ENCODE measurements at regions of chr6 and their contacts with region 1.

Region 1: DNA sequence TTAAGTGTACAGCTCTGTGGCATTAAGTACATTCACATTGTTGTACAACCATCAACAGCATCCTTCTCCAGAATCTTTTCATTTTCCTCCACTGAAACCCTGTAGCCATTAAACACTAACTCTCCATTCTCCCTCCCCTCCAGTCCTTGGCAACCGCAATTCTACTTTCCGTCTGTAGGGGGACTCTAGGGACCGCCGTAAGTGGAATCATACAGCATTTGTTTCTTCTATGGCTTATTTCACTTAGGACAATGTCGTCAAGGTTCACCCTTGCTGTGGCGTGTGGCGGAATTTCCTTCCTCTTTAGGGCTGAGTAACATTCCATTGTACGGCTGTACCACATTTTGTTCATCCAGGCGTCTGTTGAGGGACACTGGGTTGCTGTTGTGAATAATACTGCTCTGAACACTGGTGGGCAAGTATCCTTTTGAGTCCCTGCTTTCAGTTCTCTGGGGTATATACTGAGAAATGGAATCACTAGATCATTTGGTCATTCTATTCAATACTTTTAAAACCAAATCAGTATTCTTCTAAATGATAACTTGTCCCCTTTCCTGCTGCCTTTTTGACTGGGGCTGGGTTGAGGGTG is 50.7 kb downstream of the PPP1R3G start:
- DNase-seq: no peak
- H3K4me3 ChIP-seq: no peak overlapping the region
- H3K27ac ChIP-seq: no peak overlapping the region
- H3K4me1 ChIP-seq: no peaks in the 10 kb centered on the region
- H3K27me3 ChIP-seq: no peaks in the 10 kb centered on the region
- CTCF ChIP-seq: peak; percentile 67

Region 2: GRCh38 chr6:4008324-4009047 is 1127.4 kb before region 1 on chr6:
- CTCF ChIA-PET with region 1: interaction called, 18 read pairs
- POLR2A ChIA-PET with region 1: no interaction called
- intact Hi-C with region 1: no loop called
- DNase-seq: peak in 1 of 2 experiments; percentile 75
- H3K4me3 ChIP-seq: no peak overlapping the region
- H3K27ac ChIP-seq: peak overlapping the region; percentile 54
- H3K4me1 ChIP-seq: peaks cover 5% of the 10 kb centered on the region
- H3K27me3 ChIP-seq: no peaks in the 10 kb centered on the region
- CTCF ChIP-seq: peak; percentile 70

Region 3: GRCh38 chr6:5190507-5190906 is 54.6 kb after region 1 on chr6:
- CTCF ChIA-PET with region 1: no interaction called
- POLR2A ChIA-PET with region 1: no interaction called
- intact Hi-C with region 1: no loop called
- DNase-seq: peak; percentile 10 to 87
- H3K4me3 ChIP-seq: no peak overlapping the region
- H3K27ac ChIP-seq: peak overlapping the region; percentile 55
- H3K4me1 ChIP-seq: peaks cover 14% of the 10 kb centered on the region
- H3K27me3 ChIP-seq: no peaks in the 10 kb centered on the region
- CTCF ChIP-seq: no peak

Region 4: DNA sequence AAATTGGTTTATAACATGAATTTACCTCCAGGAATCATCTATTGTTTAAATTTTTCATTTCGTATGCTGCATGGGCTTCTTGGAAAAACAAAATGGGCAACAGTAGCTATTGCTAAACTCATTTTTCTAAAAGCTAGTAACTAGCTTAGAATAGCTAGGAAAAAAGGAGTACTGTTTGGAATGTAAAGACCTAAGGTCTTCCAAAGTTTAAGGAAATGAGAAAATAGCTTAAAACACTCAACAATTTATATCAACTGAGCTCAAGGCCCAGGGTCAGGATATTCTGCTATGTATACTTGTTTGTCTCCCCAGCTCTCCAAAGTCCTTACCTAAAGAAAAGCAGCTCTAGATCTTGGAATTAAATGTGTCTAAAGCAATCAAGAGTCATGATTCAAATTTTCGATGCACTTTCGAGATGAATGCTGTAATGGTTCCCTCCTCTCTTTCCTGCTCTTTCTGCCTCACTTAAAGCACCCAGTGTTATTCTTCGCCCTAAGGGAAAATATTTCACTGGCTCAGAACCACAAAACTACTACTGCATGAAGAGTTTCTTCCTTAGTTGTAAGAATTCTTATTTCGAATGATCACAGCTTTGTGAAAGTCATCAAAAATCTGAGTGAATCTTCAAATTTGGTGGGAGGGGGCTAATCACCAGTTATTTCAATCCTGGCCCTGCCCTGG is 83.3 kb after region 1 on chr6:
- CTCF ChIA-PET with region 1: no interaction called
- POLR2A ChIA-PET with region 1: no interaction called
- intact Hi-C with region 1: no loop called
- DNase-seq: no peak
- H3K4me3 ChIP-seq: no peak overlapping the region
- H3K27ac ChIP-seq: no peak overlapping the region
- H3K4me1 ChIP-seq: no peaks in the 10 kb centered on the region
- H3K27me3 ChIP-seq: no peaks in the 10 kb centered on the region
- CTCF ChIP-seq: no peak

Measured in PC-9 (cell line).